IMR-90 (cell line): ENCODE measurements at regions of chr17 and their contacts with region 1.

Region 1: GRCh38 chr17:43090022-43090421 is 35.1 kb downstream of the BRCA1 start:
- DNase-seq: no peak
- ATAC-seq: no peak
- H3K4me3 ChIP-seq: no peak overlapping the region
- H3K27ac ChIP-seq: no peak overlapping the region
- H3K4me1 ChIP-seq: no peaks in the 10 kb centered on the region
- H3K27me3 ChIP-seq: no peaks in the 10 kb centered on the region
- CTCF ChIP-seq: no peak
- POLR2A ChIP-seq: no peak
- RAD21 ChIP-seq: no peak

Region 2: DNA sequence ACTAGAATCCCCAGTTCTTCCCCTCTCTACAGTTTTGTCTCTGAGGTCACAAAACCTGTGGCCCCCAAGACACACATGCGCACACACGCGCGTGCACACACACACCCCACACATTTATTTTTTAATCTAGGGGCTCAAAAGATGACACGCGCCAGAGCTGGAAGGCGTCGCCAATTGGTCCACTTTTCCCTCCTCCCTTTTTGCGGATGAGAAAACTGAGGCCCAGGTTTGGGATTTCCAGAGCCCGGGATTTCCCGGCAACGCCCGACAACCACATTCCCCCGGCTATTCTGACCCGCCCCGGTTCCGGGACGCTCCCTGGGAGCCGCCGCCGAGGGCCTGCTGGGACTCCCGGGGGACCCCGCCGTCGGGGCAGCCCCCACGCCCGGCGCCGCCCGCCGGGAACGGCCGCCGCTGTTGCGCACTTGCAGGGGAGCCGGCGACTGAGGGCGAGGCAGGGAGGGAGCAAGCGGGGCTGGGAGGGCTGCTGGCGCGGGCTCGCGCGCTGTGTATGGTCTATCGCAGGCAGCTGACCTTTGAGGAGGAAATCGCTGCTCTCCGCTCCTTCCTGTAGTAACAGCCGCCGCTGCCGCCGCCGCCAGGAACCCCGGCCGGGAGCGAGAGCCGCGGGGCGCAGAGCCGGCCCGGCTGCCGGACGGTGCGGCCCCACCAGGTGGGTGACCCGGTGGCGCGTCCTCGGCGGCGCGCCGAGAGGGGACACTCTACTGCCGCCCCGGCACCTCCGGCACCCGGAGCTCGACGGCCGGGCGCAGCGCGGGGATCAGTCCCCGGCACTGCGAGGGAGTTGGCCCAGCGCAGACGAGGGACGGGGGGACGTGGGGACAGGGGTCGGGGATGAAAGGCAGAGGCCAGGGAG is 801.9 kb before region 1 on chr17 and contains the start of gene STAT5A:
- CTCF ChIA-PET with region 1: no interaction called
- POLR2A ChIA-PET with region 1: no interaction called
- dilution Hi-C with region 1: no loop called
- in situ Hi-C with region 1: no loop called
- intact Hi-C with region 1: no loop called
- DNase-seq: peak; percentile 69
- ATAC-seq: peak; percentile 96
- H3K4me3 ChIP-seq: peak within 1 kb of the TSS; percentile 63
- H3K27ac ChIP-seq: no peak within 1 kb of the TSS; the same call in 1 of the 2 replicates
- H3K4me1 ChIP-seq: peaks cover 14% of the 10 kb centered on the region
- H3K27me3 ChIP-seq: no peaks in the 10 kb centered on the region; the same call in 1 of the 2 replicates
- CTCF ChIP-seq: no peak
- POLR2A ChIP-seq: no peak
- RAD21 ChIP-seq: no peak
- total RNA-seq, gene STAT5A: 1.3 and 1.4 TPM in 2 replicates

Region 3: GRCh38 chr17:44084131-44084544 is 994.1 kb after region 1 on chr17:
- CTCF ChIA-PET with region 1: no interaction called
- POLR2A ChIA-PET with region 1: interaction called, 16 read pairs
- dilution Hi-C with region 1: no loop called
- in situ Hi-C with region 1: no loop called
- intact Hi-C with region 1: no loop called
- DNase-seq: no peak
- ATAC-seq: no peak
- H3K4me3 ChIP-seq: no peak overlapping the region
- H3K27ac ChIP-seq: no peak overlapping the region
- H3K4me1 ChIP-seq: peaks cover 21% of the 10 kb centered on the region
- H3K27me3 ChIP-seq: no peaks in the 10 kb centered on the region
- CTCF ChIP-seq: no peak; the same call in 1 of the 2 replicates
- POLR2A ChIP-seq: no peak
- RAD21 ChIP-seq: peak; percentile 26; the same call in 1 of the 2 replicates